Sigmoid colon (tissue), 7 donors: ENCODE measurements at regions of chr1 and their contacts with region 1.

Region 1: DNA sequence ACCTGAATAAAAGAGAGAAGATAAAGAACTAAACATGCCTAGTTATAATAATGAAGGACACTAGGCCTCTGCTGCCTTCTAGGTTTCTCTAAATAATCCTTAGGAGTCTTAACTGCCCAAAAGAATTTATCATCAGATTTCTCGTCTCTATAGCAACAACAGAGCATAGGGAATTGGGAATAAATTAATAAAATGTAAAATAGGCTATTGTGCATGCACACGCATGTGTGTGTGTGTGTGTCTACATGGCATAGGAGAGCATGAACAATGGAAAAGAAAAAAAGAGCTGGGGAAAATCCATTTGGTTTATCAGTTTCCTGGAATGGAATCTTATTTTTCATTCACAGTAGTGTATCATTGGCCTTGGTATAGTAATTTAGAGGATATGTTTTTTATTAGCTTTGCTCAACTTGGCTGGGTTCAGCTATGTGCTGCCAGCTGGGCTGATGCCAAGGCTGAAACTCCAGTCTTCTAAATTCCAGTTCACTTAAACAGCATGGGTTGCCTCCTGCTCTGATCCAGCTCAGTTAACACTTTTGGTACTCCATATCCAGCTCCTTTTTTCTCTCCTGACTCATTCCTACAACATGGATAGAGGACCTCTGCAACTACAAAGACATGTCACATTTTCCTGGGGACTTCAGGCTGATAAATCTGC is 80.6 kb upstream of the SLFNL1 start:
- DNase-seq: peak; percentile 97
- H3K4me3 ChIP-seq: no peak overlapping the region
- H3K27ac ChIP-seq: peak overlapping the region; percentile 68 to 81 (median 74)
- H3K4me1 ChIP-seq: peaks cover 0 to 44% (median 35%) of the 10 kb centered on the region in 4 donors
- H3K27me3 ChIP-seq: no peaks in the 10 kb centered on the region
- CTCF ChIP-seq: no peak
- EP300 ChIP-seq: no peak
- POLR2A ChIP-seq: no peak

Region 2: GRCh38 chr1:41045740-41046139 is 56.3 kb before region 1 on chr1:
- intact Hi-C with region 1: loop called (anchors 5 kb)
- DNase-seq: no peak
- H3K4me3 ChIP-seq: no peak overlapping the region
- H3K27ac ChIP-seq: peak overlapping the region; percentile 19 to 69 (median 38)
- H3K4me1 ChIP-seq: peaks cover 0 to 21% (median 15%) of the 10 kb centered on the region in 4 donors
- H3K27me3 ChIP-seq: no peaks in the 10 kb centered on the region
- CTCF ChIP-seq: no peak
- EP300 ChIP-seq: no peak
- POLR2A ChIP-seq: no peak

Region 3: GRCh38 chr1:41282679-41283317 is 180.7 kb after region 1 on chr1:
- intact Hi-C with region 1: no loop called
- DNase-seq: no peak
- H3K4me3 ChIP-seq: no peak overlapping the region
- H3K27ac ChIP-seq: no peak overlapping the region
- H3K4me1 ChIP-seq: peaks cover 0 to 5% (median 2%) of the 10 kb centered on the region in 4 donors
- H3K27me3 ChIP-seq: peaks cover 0 to 13% (median 0%) of the 10 kb centered on the region in 3 donors
- CTCF ChIP-seq: peak; percentile 55 to 86 (median 76)
- EP300 ChIP-seq: no peak
- POLR2A ChIP-seq: no peak